ENCODE measurements at regions of chr20 and their contacts with region 1.

Region 1: DNA sequence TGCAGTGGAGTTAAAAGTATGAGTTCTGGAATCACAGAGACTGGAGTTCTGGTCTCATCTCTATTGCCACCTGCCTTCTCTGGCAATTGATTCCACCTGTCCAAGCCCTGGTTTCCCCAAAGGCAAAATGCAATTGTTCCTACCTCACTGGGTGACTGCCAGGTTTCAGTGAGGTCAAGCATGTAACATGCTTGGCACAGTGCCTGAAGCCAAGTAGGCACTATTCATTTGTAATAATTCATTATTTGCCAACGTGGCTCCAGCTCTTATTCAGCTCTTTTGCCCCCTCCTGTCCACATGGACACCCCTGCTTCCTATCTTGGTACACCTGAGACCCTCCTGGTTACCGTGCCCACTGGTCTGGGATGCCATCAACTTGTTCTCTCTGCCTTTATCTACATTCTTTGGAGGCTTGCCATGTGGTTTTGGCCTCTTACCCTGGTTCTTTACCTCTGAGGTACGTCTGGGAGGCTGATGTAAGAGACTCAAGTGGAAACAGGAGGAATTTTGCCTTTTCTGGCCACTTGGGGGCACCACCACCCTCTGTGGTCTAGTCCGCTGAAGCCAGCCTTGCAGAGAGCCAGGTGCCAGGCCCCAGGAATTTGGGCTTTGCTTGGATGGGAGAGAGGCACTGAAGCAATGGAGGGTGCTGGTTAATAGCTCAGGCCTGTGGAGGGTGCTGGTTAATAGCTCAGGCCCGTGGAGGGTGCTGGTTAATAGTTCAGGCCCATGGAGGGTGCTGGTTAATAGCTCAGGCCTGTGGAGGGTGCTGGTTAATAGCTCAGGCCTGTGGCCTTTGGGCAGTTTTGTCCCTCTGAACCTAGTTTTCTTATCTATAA is 1.7 kb downstream of the KCNK15 start:
- DNase-seq: peak; percentile 28 to 63
- ATAC-seq: peak; percentile 50 to 57
- H3K4me3 ChIP-seq: no peak overlapping the region
- H3K27ac ChIP-seq: no peak overlapping the region
- H3K4me1 ChIP-seq: peaks cover 0 to 10% of the 10 kb centered on the region in 2 donors
- H3K27me3 ChIP-seq: peaks cover 10 to 13% (median 12%) of the 10 kb centered on the region in 3 donors
- CTCF ChIP-seq: peak; percentile 58 to 73 (median 61)
- POLR2A ChIP-seq: no peak

Region 2: GRCh38 chr20:44422083-44422482 is 325.3 kb before region 1 on chr20:
- in situ Hi-C with region 1: no loop called
- intact Hi-C with region 1: no loop called
- DNase-seq: no peak
- ATAC-seq: no peak
- H3K4me3 ChIP-seq: no peak overlapping the region
- H3K27ac ChIP-seq: no peak overlapping the region
- H3K4me1 ChIP-seq: no peaks in the 10 kb centered on the region
- H3K27me3 ChIP-seq: peaks cover 0 to 3% (median 0%) of the 10 kb centered on the region in 3 donors
- CTCF ChIP-seq: no peak
- POLR2A ChIP-seq: no peak

Region 3: GRCh38 chr20:44495802-44496481 is 251.4 kb before region 1 on chr20:
- in situ Hi-C with region 1: no loop called
- intact Hi-C with region 1: no loop called
- DNase-seq: no peak
- ATAC-seq: peak; percentile 76 to 82
- H3K4me3 ChIP-seq: no peak overlapping the region
- H3K27ac ChIP-seq: peak overlapping the region; percentile 82 to 93 (median 91)
- H3K4me1 ChIP-seq: peaks cover 40 to 48% of the 10 kb centered on the region in 2 donors
- H3K27me3 ChIP-seq: no peaks in the 10 kb centered on the region
- CTCF ChIP-seq: no peak
- POLR2A ChIP-seq: no peak

Region 4: DNA sequence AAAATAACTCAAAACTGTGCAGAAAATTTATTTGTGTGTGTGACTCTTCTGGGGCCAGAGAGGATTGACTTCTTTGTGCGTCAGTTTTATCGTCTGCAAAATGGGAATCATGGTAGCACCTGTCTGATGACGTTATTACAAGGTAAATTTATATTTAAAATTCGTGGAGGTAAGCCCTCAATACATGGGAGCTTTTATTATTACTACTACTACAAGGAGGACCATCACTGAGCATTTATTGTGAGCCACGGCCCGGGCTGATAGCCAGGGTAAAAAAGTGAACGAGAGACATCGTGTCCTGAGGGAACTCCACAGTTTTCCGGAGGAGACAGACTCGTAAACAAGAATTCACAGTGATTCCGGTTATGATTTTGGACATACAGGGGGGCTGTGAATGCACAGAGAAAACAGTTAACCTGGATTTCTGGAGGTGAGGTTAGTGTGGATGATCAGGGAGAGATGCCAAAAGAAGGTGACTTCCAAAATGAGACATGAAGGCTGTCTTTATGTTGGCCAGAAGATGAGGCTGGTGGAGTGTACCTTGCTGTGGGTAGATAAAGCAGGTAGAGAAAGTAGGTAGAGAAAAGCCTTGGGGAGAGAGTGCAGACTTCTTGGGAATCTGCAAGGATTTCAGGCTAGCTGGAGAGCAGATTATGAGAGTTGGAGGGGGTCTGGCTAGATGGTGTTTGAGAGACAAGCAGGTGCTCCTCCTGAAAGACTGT is 215.0 kb before region 1 on chr20:
- in situ Hi-C with region 1: loop called in 1 of 4 experiments (anchors 25 kb)
- intact Hi-C with region 1: no loop called
- DNase-seq: no peak
- ATAC-seq: peak; percentile 28 to 38
- H3K4me3 ChIP-seq: peak overlapping the region; percentile 63 to 82 (median 78)
- H3K27ac ChIP-seq: peak overlapping the region; percentile 74 to 85 (median 77)
- H3K4me1 ChIP-seq: peaks cover 9 to 15% of the 10 kb centered on the region in 2 donors
- H3K27me3 ChIP-seq: no peaks in the 10 kb centered on the region
- CTCF ChIP-seq: no peak
- POLR2A ChIP-seq: no peak

Region 5: DNA sequence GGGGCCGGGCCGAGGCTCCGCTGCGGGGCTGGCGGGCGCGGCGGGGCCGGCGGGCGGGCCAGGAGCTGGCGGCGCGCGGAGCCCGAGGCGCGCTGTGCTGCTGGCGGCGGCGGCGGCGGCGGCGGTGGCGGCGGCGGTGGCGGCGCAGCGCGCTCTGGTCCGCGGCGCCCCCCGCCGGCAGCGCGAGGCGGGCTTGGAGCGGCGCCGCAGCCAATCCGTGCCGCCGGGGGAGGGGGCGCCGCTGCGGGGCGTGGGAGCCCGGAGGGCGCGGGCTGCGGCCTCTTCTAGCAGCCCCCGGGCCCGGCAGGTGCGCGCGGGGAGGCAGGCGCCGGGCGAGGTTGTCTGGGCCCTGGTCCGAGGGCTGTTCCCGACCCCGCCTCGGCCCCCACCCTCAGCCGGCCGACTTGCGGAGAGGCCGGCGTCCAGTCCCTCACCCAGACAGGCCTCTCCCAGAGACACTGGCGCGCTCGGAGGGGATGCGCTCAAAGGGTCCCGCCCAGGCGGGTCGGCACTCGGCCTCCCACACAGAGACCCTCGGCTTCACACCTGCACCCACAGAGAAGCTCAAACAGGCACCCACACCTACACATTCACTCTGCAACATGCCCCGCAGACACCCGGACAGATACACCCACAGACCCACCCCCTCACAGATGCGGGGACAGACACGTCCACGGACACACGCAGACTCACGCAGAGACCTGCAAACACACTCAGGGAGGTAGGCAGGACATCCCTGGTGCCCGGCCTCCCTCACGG is 63.2 kb after region 1 on chr20 and contains the start of gene RIMS4:
- in situ Hi-C with region 1: no loop called
- intact Hi-C with region 1: loop called (anchors 1 kb)
- DNase-seq: no peak
- ATAC-seq: peak in 1 of 2 donors; percentile 42
- H3K4me3 ChIP-seq: peak within 1 kb of the TSS; percentile 24 to 48 (median 33)
- H3K27ac ChIP-seq: no peak within 1 kb of the TSS
- H3K4me1 ChIP-seq: peaks cover 3 to 23% of the 10 kb centered on the region in 2 donors
- H3K27me3 ChIP-seq: peaks cover 11 to 28% (median 15%) of the 10 kb centered on the region in 3 donors
- CTCF ChIP-seq: peak in 1 of 5 experiments; percentile 14
- POLR2A ChIP-seq: no peak
- total RNA-seq, gene RIMS4: 0.13 to 0.41 TPM in 2 of 4 donors, not detected in the others

Region 6: DNA sequence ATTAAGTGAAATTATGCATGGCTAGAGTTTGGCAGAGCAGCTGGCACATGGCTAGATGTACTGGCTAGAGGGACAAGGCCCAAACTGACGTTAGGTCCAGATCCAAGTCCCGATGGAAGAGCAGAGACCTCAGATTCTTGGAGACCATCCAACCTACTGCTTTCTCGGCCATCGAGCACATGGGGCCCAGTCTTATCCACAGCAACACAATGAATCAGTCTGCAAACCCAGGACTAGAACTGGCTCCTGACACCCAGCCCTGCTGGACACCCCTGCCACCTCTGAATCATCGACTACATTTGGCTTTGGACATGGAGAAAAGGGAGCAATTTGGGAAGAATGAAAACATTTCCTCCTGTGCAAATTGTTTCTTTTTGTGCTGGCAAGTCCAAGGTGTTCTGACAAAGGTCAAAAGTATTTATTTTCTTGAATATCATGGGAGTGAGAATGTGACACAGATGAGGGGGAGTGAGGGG is 114.2 kb after region 1 on chr20:
- in situ Hi-C with region 1: loop called in 3 of 4 experiments (anchors 5 to 10 kb)
- intact Hi-C with region 1: no loop called
- DNase-seq: peak; percentile 18 to 48
- ATAC-seq: peak; percentile 78 to 88
- H3K4me3 ChIP-seq: no peak overlapping the region
- H3K27ac ChIP-seq: peak overlapping the region in 1 of 4 donors; percentile 11
- H3K4me1 ChIP-seq: peaks cover 6 to 9% of the 10 kb centered on the region in 2 donors
- H3K27me3 ChIP-seq: no peaks in the 10 kb centered on the region
- CTCF ChIP-seq: no peak
- POLR2A ChIP-seq: no peak

Region 7: GRCh38 chr20:44866703-44867335 is 119.4 kb after region 1 on chr20:
- in situ Hi-C with region 1: loop called in 3 of 4 experiments (anchors 5 to 10 kb)
- intact Hi-C with region 1: loop called (anchors 1 kb)
- DNase-seq: no peak
- ATAC-seq: no peak
- H3K4me3 ChIP-seq: peak overlapping the region in 1 of 4 donors; percentile 25
- H3K27ac ChIP-seq: no peak overlapping the region
- H3K4me1 ChIP-seq: peaks cover 2 to 12% of the 10 kb centered on the region in 2 donors
- H3K27me3 ChIP-seq: no peaks in the 10 kb centered on the region
- CTCF ChIP-seq: no peak
- POLR2A ChIP-seq: no peak

Region 8: DNA sequence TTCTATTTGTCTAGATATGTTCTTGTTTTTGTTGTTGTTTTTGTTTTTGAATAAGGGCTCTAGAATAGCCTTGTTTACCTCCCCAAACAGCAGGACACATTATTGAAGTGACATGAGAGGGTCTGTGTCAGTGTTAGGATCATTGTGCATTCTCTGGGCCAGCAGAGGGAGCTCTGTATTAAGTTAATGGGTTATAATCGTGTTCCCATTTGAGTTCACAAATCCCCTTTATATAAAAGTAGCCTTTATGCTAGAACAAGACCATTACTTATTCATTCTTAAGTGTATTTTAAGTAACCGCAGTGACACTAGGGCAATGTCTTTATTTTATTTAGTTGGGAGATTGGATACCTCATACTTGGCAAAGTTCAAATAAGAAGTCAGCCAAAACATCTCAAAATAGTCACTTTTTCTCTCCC is 263.7 kb after region 1 on chr20:
- in situ Hi-C with region 1: no loop called
- intact Hi-C with region 1: no loop called
- DNase-seq: peak; percentile 22
- ATAC-seq: peak; percentile 70 to 76
- H3K4me3 ChIP-seq: no peak overlapping the region
- H3K27ac ChIP-seq: no peak overlapping the region
- H3K4me1 ChIP-seq: peaks cover 3% of the 10 kb centered on the region in 2 donors
- H3K27me3 ChIP-seq: no peaks in the 10 kb centered on the region
- CTCF ChIP-seq: peak; percentile 14 to 71 (median 51)
- POLR2A ChIP-seq: no peak

Measured in gastrocnemius medialis (tissue), 4 donors.